ENCODE measurements at regions of chr11 and their contacts with region 1.

Region 1: GRCh38 chr11:32333320-32333991 is 101.9 kb downstream of the WT1 start:
- DNase-seq: no peak
- ATAC-seq: peak; percentile 90
- H3K4me3 ChIP-seq: peak overlapping the region; percentile 41 to 60
- H3K27ac ChIP-seq: no peak overlapping the region
- H3K4me1 ChIP-seq: peaks cover 4% of the 10 kb centered on the region; the same call in 1 of the 2 replicates
- H3K27me3 ChIP-seq: no peaks in the 10 kb centered on the region; the same call in none of the 2 replicates
- CTCF ChIP-seq: peak; percentile 74

Region 2: GRCh38 chr11:31558001-31558400 is 775.5 kb before region 1 on chr11:
- CTCF ChIA-PET with region 1: interaction called, 13 read pairs
- POLR2A ChIA-PET with region 1: no interaction called
- in situ Hi-C with region 1: no loop called
- intact Hi-C with region 1: no loop called
- DNase-seq: no peak
- ATAC-seq: no peak
- H3K4me3 ChIP-seq: no peak overlapping the region
- H3K27ac ChIP-seq: no peak overlapping the region
- H3K4me1 ChIP-seq: no peaks in the 10 kb centered on the region
- H3K27me3 ChIP-seq: no peaks in the 10 kb centered on the region
- CTCF ChIP-seq: no peak

Region 3: DNA sequence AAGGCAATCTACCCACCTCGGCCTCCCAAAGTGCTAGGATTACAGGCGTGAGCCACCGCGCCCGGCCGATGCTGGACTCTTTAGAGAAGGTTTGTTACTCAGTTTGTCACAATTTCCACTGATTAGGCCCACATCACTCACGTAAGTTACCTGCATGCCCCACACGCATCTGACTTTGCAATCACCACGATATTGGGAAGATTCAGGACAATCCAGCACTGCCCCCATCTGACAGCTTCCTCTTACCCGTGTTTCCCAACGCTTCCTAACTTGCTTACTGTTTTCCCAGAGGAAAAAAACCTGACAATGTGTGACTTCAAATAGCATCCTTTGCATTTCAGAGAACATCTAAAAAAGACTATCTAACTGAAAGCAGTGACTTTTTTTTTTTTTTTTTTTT is 228.4 kb after region 1 on chr11:
- CTCF ChIA-PET with region 1: interaction called, 15 read pairs
- POLR2A ChIA-PET with region 1: no interaction called
- in situ Hi-C with region 1: no loop called
- intact Hi-C with region 1: no loop called
- DNase-seq: no peak
- ATAC-seq: no peak
- H3K4me3 ChIP-seq: no peak overlapping the region
- H3K27ac ChIP-seq: no peak overlapping the region
- H3K4me1 ChIP-seq: no peaks in the 10 kb centered on the region
- H3K27me3 ChIP-seq: no peaks in the 10 kb centered on the region
- CTCF ChIP-seq: peak; percentile 39

Region 4: DNA sequence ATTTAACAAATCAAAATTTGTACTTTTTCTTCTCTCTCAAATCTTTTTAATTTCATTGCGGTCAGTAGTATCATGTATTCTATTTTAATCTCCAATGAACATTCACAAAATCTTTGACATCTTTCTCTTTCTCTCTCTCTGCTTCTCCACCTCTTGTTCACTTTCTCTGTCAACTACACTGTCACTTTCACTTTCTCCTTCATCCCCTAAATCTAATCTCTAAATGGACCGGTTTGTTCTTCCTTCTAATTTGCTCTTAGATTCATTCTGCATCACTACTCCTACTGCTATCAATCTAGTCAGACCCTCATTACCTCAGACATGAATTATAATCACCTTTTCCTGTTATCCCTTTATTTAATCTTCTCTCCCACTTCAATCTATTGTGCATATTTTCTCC is 442.5 kb after region 1 on chr11:
- CTCF ChIA-PET with region 1: no interaction called
- POLR2A ChIA-PET with region 1: interaction called, 10 read pairs
- in situ Hi-C with region 1: no loop called
- intact Hi-C with region 1: no loop called
- DNase-seq: no peak
- ATAC-seq: no peak
- H3K4me3 ChIP-seq: no peak overlapping the region
- H3K27ac ChIP-seq: no peak overlapping the region
- H3K4me1 ChIP-seq: no peaks in the 10 kb centered on the region
- H3K27me3 ChIP-seq: no peaks in the 10 kb centered on the region
- CTCF ChIP-seq: no peak

Measured in Panc1 (cell line).